ENCODE measurements at regions of chr12 and their contacts with region 1.

Region 1: GRCh38 chr12:102816816-102817434 is 100.1 kb downstream of the PAH start:
- DNase-seq: peak; percentile 48
- H3K4me3 Mint-ChIP-seq: no peak overlapping the region
- H3K27ac Mint-ChIP-seq: no peak overlapping the region
- H3K4me1 Mint-ChIP-seq: peaks cover 9% of the 10 kb centered on the region
- H3K27me3 Mint-ChIP-seq: peaks cover 26% of the 10 kb centered on the region
- CTCF ChIP-seq: peak; percentile 58

Region 2: GRCh38 chr12:102745971-102746600 is 70.8 kb before region 1 on chr12:
- CTCF ChIA-PET with region 1: no interaction called
- POLR2A ChIA-PET with region 1: no interaction called
- intact Hi-C with region 1: no loop called
- DNase-seq: no peak
- H3K4me3 Mint-ChIP-seq: no peak overlapping the region
- H3K27ac Mint-ChIP-seq: no peak overlapping the region
- H3K4me1 Mint-ChIP-seq: no peaks in the 10 kb centered on the region
- H3K27me3 Mint-ChIP-seq: no peaks in the 10 kb centered on the region
- CTCF ChIP-seq: no peak

Region 3: GRCh38 chr12:102806110-102806509 is 10.8 kb before region 1 on chr12:
- CTCF ChIA-PET with region 1: interaction called, 21 read pairs
- POLR2A ChIA-PET with region 1: no interaction called
- intact Hi-C with region 1: no loop called
- DNase-seq: no peak
- H3K4me3 Mint-ChIP-seq: no peak overlapping the region
- H3K27ac Mint-ChIP-seq: no peak overlapping the region
- H3K4me1 Mint-ChIP-seq: no peaks in the 10 kb centered on the region
- H3K27me3 Mint-ChIP-seq: no peaks in the 10 kb centered on the region
- CTCF ChIP-seq: no peak

Region 4: DNA sequence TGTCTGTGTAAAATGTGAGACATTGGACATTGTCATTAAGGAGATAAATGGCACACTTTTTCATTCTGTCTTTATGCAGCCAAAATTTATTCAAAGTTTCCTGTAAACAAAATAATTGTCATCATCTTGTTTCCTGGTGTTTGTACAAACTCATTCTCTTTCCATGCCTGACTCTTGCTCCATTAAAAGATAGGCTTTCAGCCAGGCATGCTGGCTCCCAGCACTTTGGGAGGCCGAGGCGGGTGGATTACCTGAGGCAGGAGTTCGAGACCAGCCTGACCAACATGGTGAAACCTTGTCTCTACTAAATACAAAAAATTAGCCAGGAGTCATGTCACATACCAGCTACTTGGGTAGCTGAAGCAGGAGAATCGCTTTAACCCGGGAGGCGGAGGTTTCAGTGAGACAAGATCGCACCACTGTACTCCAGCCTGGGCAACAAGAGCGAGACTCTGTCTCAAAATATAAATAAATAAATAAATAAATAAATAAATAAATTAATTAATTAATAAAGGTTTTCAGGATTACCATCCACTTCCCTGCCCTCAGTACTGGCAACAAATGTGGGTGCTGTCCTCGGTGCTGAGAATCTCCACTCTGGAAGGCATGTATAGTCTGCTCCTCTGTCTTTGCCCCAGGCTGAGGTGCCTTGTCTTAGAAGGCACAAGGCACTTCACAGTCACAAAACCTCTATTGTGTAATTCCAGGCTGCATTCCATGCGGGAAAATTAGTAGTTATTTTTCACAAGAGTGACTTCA is 16.9 kb after region 1 on chr12:
- CTCF ChIA-PET with region 1: interaction called, 11 read pairs
- POLR2A ChIA-PET with region 1: no interaction called
- intact Hi-C with region 1: no loop called
- DNase-seq: peak; percentile 45
- H3K4me3 Mint-ChIP-seq: no peak overlapping the region
- H3K27ac Mint-ChIP-seq: no peak overlapping the region
- H3K4me1 Mint-ChIP-seq: no peaks in the 10 kb centered on the region
- H3K27me3 Mint-ChIP-seq: no peaks in the 10 kb centered on the region
- CTCF ChIP-seq: no peak

Region 5: DNA sequence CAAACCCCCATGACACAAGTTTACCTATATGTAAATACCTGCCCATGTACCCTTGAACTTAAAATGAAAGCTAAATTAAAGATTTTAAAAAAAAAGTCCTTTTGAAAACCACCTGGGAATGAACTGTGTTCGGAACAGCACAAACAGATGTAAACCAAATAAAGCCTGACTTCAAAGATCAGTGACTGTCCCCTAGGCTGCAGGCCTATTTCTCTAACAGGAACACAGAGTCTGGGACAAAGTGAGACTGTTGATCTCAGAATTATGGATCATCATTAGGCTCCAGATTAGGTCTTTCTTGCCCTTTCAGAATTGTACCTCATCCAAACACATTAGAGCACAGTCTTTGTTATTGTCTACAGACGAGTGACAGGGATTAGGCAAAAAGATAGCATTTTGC is 45.6 kb after region 1 on chr12:
- CTCF ChIA-PET with region 1: no interaction called
- POLR2A ChIA-PET with region 1: no interaction called
- intact Hi-C with region 1: no loop called
- DNase-seq: no peak
- H3K4me3 Mint-ChIP-seq: no peak overlapping the region
- H3K27ac Mint-ChIP-seq: no peak overlapping the region
- H3K4me1 Mint-ChIP-seq: no peaks in the 10 kb centered on the region
- H3K27me3 Mint-ChIP-seq: no peaks in the 10 kb centered on the region
- CTCF ChIP-seq: no peak

Measured in MCF 10A (cell line).